Naive thymus-derived CD4-positive, alpha-beta T cell (primary cell): ENCODE measurements at regions of chr10 and their contacts with region 1.

Region 1: GRCh38 chr10:15168781-15169554 is 475 bp upstream of the NMT2 start:
- DNase-seq: peak; percentile 84 to 97 (median 91)
- ATAC-seq: peak; percentile 93
- H3K4me3 ChIP-seq: peak overlapping the region; percentile 57
- H3K4me3 Mint-ChIP-seq: peak overlapping the region; percentile 80 to 97 (median 89)
- H3K27ac ChIP-seq: peak overlapping the region; percentile 66
- H3K27ac Mint-ChIP-seq: peak overlapping the region; percentile 91 to 95 (median 95)
- H3K4me1 ChIP-seq: peaks cover 41 to 44% of the 10 kb centered on the region in 2 donors
- H3K4me1 Mint-ChIP-seq: peaks cover 47 to 72% (median 63%) of the 10 kb centered on the region in 7 donors
- H3K27me3 ChIP-seq: no peaks in the 10 kb centered on the region
- H3K27me3 Mint-ChIP-seq: no peaks in the 10 kb centered on the region

Region 2: DNA sequence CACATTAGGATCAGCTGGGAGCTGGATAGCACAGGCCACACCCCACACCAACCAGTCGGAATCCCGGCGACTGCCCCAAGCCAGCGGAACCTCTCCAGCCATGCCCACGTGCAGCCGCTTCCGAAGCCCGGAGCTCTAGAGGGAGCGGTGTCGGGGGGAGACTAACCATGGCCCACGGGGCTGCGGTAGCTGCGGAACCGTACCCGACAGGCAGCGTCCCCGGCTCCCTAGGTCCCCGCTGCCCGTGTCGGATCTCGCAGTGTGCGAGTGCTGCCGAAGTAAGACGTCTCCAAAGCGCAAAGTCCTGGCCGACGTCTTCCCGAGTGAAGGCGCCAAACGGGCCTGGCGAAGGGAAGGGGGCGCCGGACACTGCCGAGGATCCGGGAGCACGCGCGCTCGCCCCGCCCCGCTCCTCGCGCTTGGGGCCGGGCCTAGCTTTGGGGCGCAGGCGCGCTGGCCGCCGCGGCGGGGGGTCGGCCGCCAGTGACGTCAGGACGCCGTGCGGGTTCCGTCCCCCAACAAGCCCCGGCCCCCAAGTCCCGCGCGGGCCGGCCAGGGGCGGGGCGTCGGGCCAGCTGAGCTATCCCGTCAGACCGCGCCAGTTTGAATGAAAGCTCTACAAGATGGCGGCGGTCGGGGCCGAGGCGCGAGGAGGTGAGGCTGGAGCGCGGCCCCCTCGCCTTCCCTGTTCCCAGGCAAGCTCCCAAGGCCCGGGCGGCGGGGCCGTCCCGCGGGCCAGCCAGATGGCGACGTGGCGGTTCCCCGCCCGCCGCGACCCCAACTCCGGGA is 290.5 kb before region 1 on chr10 and contains the start of gene SUV39H2:
- CTCF ChIA-PET with region 1: no interaction called
- POLR2A ChIA-PET with region 1: interaction called, 3 read pairs
- intact Hi-C with region 1: loop called (anchors 1 kb)
- DNase-seq: peak; percentile 81 to 97 (median 87)
- ATAC-seq: peak; percentile 93
- H3K4me3 ChIP-seq: peak within 1 kb of the TSS; percentile 92
- H3K4me3 Mint-ChIP-seq: peak within 1 kb of the TSS; percentile 92 to 97 (median 94)
- H3K27ac ChIP-seq: peak within 1 kb of the TSS; percentile 87
- H3K27ac Mint-ChIP-seq: peak within 1 kb of the TSS; percentile 71 to 94 (median 91)
- H3K4me1 ChIP-seq: peaks cover 4 to 7% of the 10 kb centered on the region in 2 donors
- H3K4me1 Mint-ChIP-seq: peaks cover 7 to 46% (median 41%) of the 10 kb centered on the region in 7 donors
- H3K27me3 ChIP-seq: no peaks in the 10 kb centered on the region
- H3K27me3 Mint-ChIP-seq: no peaks in the 10 kb centered on the region
- total RNA-seq, gene SUV39H2: 2.4 to 25.0 (median 6.8) TPM

Region 3: DNA sequence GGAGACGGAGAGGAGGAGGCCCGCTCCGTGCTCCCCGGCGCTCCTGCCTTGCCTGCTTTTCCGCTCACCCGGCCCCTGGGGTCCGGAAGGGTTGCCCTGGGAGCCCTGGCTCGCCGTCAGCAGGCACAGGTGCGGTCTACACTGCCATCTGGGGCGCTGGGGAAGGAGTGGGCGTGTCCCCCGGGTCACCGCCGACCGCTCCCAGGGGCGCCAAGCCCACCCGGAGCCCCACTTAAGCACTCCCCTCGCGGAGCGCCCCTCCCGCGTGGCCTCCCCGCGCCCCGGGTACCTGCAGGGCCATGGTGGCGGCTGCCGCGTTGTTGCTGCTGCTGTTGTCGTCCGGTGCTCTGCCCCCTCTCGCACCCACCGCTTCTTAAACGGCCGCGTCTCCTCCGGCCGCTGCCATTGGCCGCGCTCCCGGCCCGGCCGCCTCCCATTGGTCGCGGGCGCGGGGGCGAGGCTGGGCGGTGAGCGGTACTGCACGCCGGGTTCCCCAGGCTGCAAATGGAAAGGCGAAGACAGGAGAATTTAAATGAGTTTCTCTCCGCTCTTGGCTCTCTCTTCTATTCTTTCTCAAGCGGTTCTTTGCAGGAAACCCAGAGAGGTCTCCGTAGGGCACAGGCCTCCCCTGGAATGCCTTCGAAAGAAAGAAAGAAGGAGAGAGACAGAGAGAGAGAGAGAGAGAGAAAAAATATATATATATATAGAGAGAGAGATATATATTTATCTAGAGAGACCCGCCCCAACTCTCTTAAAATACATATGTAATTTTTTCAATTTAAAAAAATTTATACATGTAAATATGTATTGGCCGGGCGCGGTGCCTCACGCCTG is 80.3 kb before region 1 on chr10 and contains the start of gene ACBD7:
- CTCF ChIA-PET with region 1: no interaction called
- POLR2A ChIA-PET with region 1: no interaction called
- intact Hi-C with region 1: loop called in 1 of 2 experiments (anchors 2 kb)
- DNase-seq: peak; percentile 74 to 87 (median 78)
- ATAC-seq: peak; percentile 98
- H3K4me3 ChIP-seq: peak within 1 kb of the TSS; percentile 71
- H3K4me3 Mint-ChIP-seq: peak within 1 kb of the TSS; percentile 69 to 82 (median 77)
- H3K27ac ChIP-seq: no peak within 1 kb of the TSS
- H3K27ac Mint-ChIP-seq: peak within 1 kb of the TSS in 2 of 9 donors; percentile 29 to 45
- H3K4me1 ChIP-seq: no peaks in the 10 kb centered on the region
- H3K4me1 Mint-ChIP-seq: peaks cover 0 to 6% (median 0%) of the 10 kb centered on the region in 7 donors
- H3K27me3 ChIP-seq: no peaks in the 10 kb centered on the region
- H3K27me3 Mint-ChIP-seq: peaks cover 0 to 19% (median 0%) of the 10 kb centered on the region in 5 donors
- total RNA-seq, gene ACBD7: 0.27 to 1.5 (median 0.60) TPM in 4 of 5 experiments, not detected in the other

Region 4: GRCh38 chr10:15141136-15142054 is 27.6 kb before region 1 on chr10:
- CTCF ChIA-PET with region 1: interaction called, 5 read pairs
- POLR2A ChIA-PET with region 1: interaction called, 5 read pairs
- intact Hi-C with region 1: loop called in 1 of 2 experiments (anchors 1 kb)
- DNase-seq: peak in 3 of 9 donors; percentile 8 to 31 (median 9)
- ATAC-seq: peak; percentile 49
- H3K4me3 ChIP-seq: no peak overlapping the region
- H3K4me3 Mint-ChIP-seq: peak overlapping the region; percentile 21 to 83 (median 66)
- H3K27ac ChIP-seq: no peak overlapping the region
- H3K27ac Mint-ChIP-seq: peak overlapping the region in 8 of 9 donors; percentile 3 to 89 (median 53)
- H3K4me1 ChIP-seq: peaks cover 0 to 20% of the 10 kb centered on the region in 2 donors
- H3K4me1 Mint-ChIP-seq: peaks cover 28 to 74% (median 58%) of the 10 kb centered on the region in 7 donors
- H3K27me3 ChIP-seq: no peaks in the 10 kb centered on the region
- H3K27me3 Mint-ChIP-seq: no peaks in the 10 kb centered on the region

Region 5: GRCh38 chr10:15200626-15201025 is 31.7 kb after region 1 on chr10:
- CTCF ChIA-PET with region 1: interaction called, 4 read pairs
- POLR2A ChIA-PET with region 1: interaction called, 55 read pairs
- intact Hi-C with region 1: loop called in 1 of 2 experiments (anchors 1 kb)
- DNase-seq: no peak
- ATAC-seq: no peak
- H3K4me3 ChIP-seq: no peak overlapping the region
- H3K4me3 Mint-ChIP-seq: no peak overlapping the region
- H3K27ac ChIP-seq: no peak overlapping the region
- H3K27ac Mint-ChIP-seq: peak overlapping the region in 4 of 9 donors; percentile 9 to 68 (median 58)
- H3K4me1 ChIP-seq: peaks cover 9 to 19% of the 10 kb centered on the region in 2 donors
- H3K4me1 Mint-ChIP-seq: peaks cover 22 to 69% (median 55%) of the 10 kb centered on the region in 7 donors
- H3K27me3 ChIP-seq: no peaks in the 10 kb centered on the region
- H3K27me3 Mint-ChIP-seq: no peaks in the 10 kb centered on the region

Region 6: DNA sequence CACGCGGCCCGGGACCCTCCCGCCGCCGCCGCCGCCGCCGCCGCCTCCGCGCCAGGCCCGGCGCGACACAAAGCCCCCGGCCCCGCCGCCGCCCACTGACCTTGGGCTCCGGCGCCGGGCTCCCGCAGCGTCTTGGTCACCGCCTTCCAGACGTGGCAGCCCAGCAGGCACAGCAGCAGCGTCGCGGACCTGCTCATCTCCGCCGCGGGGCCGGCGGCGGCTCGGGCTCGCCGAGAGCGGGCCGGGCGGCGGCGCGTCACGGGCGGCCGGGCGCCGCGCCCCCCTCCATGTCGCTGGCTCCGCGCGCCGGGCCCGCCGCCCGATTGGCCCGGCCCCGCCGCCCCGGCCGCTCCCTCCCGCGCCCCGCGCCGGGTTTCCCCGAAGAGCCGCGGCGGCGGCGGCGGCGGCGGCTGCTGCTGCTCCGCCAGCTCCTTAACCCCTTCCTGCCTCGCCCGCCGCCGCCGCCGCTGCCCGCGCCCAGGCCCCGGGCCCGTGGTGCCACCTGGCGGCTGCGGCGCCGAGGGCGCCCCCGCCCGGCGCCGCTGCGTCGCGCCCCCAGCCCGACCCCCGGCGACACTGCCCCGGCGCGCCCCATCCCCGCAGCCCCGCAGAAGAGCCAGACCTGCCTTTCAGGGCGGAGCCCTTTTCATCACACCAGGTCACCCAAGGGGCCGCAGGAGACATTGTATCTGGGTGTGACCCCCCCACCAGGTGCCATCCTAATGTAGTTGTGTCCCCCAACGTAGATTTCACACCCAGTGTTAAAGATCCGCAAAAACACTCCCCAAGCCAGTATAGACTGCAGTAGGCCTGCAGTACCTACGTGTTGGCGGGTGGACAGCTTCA is 202.1 kb after region 1 on chr10 and contains the start of gene FAM171A1:
- CTCF ChIA-PET with region 1: no interaction called
- POLR2A ChIA-PET with region 1: no interaction called
- intact Hi-C with region 1: loop called (anchors 1 to 2 kb)
- DNase-seq: peak; percentile 37 to 71 (median 62)
- ATAC-seq: peak; percentile 91
- H3K4me3 ChIP-seq: peak within 1 kb of the TSS; percentile 47
- H3K4me3 Mint-ChIP-seq: peak within 1 kb of the TSS; percentile 59 to 92 (median 83)
- H3K27ac ChIP-seq: peak within 1 kb of the TSS; percentile 21
- H3K27ac Mint-ChIP-seq: peak within 1 kb of the TSS in 8 of 9 donors; percentile 18 to 89 (median 62)
- H3K4me1 ChIP-seq: peaks cover 3 to 5% of the 10 kb centered on the region in 2 donors
- H3K4me1 Mint-ChIP-seq: peaks cover 4 to 12% (median 5%) of the 10 kb centered on the region in 7 donors
- H3K27me3 ChIP-seq: peaks cover 0 to 9% of the 10 kb centered on the region in 2 donors
- H3K27me3 Mint-ChIP-seq: peaks cover 0 to 81% (median 6%) of the 10 kb centered on the region in 5 donors
- total RNA-seq, gene FAM171A1: 3.2 to 8.0 (median 4.9) TPM